Motor neuron (in vitro differentiated cells): ENCODE measurements at regions of chr10 and their contacts with region 1.

Region 1: GRCh38 chr10:103069453-103070331 is 123.4 kb downstream of the NT5C2 start:
- ATAC-seq: peak in 7 of 8 experiments; percentile 47 to 90 (median 69)
- H3K4me3 ChIP-seq: no peak overlapping the region
- H3K27ac ChIP-seq: no peak overlapping the region
- H3K4me1 ChIP-seq: no peaks in the 10 kb centered on the region

Region 2: DNA sequence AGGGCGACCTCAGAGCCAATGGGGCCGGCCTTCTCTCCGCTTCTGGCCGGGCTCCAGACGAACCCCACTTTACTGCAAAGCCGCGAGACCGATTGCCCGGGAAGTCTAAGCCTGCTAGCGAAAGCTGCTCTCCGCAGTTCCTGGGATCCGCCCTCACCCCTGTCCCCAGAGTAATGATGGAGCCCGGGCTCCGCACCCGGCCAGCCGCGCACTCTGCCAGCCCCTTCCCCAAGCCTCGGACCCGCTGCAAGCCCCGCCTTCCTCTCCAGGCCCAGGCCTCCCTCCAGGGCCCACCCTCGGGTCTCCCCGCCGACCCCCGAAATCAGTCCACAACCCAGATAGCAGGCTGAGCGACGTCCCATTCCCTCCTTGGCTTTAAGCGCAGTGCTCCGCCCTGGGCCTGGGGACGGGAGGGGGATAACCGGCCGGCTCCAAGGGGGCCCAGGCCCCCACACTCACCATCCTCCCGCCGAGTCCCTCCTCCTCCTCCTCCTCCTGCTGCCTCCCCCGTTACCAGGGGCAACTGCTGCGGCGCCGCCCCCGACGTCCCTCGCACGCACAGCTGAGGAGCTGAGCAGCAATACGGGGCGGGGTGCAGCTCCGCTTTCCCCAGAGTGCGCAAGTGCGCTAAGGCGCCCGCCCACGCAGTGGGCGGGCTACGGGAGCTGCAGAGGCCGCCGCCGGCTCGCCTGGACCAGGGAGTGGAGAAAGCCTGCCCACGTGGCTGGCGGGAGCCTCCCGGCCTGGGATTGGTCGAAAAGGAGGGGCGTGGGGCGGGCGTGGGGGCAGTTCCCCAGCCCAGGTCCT is 355.7 kb before region 1 on chr10 and contains the start of gene ARL3:
- in situ Hi-C with region 1: no loop called
- ATAC-seq: peak; percentile 85 to 94 (median 92)
- H3K4me3 ChIP-seq: peak within 1 kb of the TSS; percentile 66 to 95 (median 70)
- H3K27ac ChIP-seq: peak within 1 kb of the TSS; percentile 85 to 90
- H3K4me1 ChIP-seq: peaks cover 19 to 20% of the 10 kb centered on the region in 2 donors
- total RNA-seq, gene ARL3: 4.9 to 29.8 (median 19.4) TPM

Region 3: DNA sequence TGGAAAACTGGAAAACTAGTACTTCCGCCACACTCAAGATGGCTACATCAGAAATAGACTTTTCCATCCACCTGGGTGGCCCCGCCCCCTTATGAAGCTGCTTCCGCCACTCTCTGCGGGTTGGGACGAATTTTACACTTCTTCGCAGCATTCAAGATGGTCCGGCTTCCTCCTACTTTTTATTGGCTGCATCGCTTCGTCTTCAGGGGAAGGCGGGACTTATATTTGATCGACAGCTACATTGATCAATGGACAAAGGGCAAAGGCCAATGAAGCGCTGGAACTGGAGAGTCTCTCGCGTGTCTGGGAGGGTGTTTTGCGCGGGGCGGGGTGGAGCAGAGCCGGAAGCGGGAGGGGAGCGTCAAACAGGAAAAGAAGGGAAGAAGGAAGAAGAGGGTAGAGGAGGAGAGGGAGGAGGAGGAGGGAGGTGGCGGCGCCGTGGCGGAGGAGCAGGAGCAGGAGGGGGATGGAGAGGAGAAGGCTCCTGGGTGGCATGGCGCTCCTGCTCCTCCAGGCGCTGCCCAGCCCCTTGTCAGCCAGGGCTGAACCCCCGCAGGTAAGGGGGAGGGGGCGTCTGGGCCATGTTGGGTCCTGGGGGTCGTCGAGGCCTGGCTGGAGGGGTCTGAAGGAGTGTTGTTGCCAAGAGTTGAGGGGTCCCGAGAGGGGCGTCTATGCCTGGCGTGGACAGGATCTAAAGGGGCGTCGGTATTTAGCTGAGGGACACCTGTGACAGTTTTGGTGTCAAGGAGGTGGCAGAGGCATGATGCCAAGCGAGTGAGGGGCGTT is 325.9 kb before region 1 on chr10 and contains the start of gene WBP1L:
- in situ Hi-C with region 1: loop called in 1 of 9 experiments (anchors 25 kb)
- ATAC-seq: peak; percentile 93 to 98 (median 96)
- H3K4me3 ChIP-seq: peak within 1 kb of the TSS; percentile 69 to 79 (median 69)
- H3K27ac ChIP-seq: peak within 1 kb of the TSS; percentile 18 to 46
- H3K4me1 ChIP-seq: peaks cover 0 to 8% of the 10 kb centered on the region in 2 donors
- total RNA-seq, gene WBP1L: 21.1 to 49.7 (median 26.7) TPM

Region 4: GRCh38 chr10:102835007-102835482 is 234.6 kb before region 1 on chr10:
- in situ Hi-C with region 1: loop called in 1 of 9 experiments (anchors 10 kb)
- ATAC-seq: peak; percentile 95 to 100 (median 100)
- H3K4me3 ChIP-seq: no peak overlapping the region
- H3K27ac ChIP-seq: no peak overlapping the region
- H3K4me1 ChIP-seq: peaks cover 0 to 2% of the 10 kb centered on the region in 2 donors

Region 5: DNA sequence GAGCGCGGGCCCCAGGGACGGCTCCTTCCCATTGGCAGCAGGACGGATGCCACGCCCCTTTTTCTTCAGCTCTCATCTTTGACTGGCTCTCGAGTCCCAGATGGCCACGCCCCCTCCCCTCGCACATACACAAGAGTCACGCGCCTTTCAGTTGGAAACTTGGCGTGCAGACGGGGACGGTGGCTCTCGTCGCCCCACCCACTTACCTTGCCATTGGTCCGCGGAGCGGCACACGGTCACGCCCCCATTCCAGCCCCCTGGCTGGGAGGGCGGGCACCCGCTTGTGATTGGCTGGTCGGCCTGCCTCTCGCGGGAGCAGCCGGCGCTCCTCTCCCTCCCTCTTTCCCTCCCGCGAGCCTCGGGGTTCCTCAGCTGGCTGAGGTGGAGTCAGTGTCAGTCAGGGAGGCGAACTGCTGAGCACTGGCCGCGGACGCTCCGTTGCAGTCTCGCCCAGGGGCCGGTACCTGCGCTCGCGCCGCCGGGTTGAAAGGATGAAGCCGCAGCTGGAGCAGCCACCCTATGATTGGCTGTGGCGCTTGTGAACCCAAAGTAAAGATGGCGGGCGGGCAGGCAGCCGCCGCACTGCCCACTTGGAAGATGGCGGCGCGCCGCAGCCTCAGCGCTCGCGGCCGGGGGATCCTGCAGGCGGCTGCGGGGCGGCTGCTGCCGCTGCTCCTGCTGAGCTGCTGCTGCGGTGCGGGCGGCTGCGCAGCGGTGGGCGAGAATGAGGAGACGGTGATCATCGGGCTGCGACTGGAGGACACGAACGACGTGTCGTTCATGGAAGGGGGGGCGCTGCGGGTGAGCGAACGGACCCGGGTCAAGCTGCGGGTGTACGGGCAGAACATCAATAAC is 151.5 kb before region 1 on chr10 and contains the start of gene CNNM2:
- in situ Hi-C with region 1: loop called in 2 of 9 experiments (anchors 10 kb)
- ATAC-seq: peak; percentile 82 to 94 (median 90)
- H3K4me3 ChIP-seq: peak within 1 kb of the TSS; percentile 79 to 97 (median 89)
- H3K27ac ChIP-seq: peak within 1 kb of the TSS; percentile 85 to 88
- H3K4me1 ChIP-seq: peaks cover 3 to 15% of the 10 kb centered on the region in 2 donors
- total RNA-seq, gene CNNM2: 4.4 to 11.4 (median 6.2) TPM

Region 6: DNA sequence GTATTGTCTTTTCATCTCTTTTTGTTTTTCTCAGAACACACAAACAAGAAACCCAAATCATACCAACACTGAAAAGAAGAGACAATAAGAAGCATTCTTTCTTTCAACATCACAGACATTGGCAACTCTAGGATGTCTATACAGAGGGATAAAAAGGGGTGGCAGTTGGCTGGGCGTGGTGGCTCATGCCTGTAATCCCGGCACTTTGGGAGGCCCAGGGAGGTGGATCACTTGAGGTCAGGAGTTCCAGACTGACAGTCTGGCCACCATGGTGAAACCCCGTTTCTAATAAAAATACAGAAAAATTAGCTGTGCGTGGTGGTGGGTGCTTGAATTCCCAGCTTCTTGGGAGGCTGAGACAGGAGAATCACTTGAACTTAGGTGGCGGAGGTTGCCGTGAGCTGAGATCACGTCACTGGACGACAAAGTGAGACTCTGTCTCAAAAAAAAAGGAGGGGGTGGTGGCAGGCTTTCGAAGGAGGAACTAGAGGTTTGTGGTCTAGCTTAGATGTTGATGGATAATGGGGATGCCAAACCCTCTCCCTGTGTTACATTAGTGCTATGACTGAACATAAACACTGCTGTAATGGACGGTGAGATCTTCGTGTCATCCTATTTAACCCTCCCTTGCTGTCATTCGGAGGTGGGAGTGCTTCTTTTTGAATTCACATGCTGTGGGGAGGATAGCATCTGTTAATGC is 142.2 kb before region 1 on chr10:
- in situ Hi-C with region 1: loop called in 1 of 9 experiments (anchors 10 kb)
- ATAC-seq: no peak
- H3K4me3 ChIP-seq: no peak overlapping the region
- H3K27ac ChIP-seq: no peak overlapping the region
- H3K4me1 ChIP-seq: peaks cover 0 to under 1% of the 10 kb centered on the region in 2 donors